ENCODE measurements at regions of chr6 and their contacts with region 1.

Region 1: DNA sequence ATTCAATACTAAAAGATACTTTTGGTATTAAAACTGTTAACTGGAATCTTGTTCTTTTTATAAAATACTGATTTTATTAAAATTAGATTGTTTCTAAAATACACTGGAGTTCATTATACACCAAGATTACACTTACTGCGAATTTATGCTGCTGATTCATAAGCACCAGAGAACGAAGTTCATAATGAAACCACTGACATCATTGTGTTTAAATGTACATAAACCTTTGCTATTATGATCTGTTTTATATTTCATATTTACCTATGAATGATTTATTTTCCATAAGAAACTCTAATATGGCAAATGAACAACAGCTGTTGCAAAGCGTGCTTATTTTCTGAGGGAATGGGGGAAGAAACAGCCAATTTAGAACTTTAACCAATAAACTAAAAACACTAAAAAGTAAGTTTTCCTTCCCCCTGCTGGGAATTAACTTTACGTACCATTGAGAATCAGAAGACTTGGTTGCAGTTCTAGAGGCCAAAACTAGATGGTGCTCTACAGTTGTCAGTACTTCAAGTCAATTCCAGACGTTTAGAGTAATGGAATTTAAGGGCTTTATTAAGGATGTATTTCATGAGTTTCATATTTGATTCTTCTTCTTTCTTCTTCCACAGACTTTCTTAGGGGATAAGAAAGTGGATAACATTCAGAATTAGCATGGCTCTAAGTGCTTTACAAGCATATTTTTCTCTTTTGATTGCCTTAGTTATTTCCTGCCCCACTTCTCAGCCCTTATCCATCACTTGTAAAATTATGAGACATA is 30.8 kb upstream of the COL19A1 start:
- DNase-seq: peak; percentile 12
- H3K4me3 ChIP-seq: no peak overlapping the region
- H3K27me3 ChIP-seq: no peaks in the 10 kb centered on the region
- CTCF ChIP-seq: peak; percentile 90

Region 2: DNA sequence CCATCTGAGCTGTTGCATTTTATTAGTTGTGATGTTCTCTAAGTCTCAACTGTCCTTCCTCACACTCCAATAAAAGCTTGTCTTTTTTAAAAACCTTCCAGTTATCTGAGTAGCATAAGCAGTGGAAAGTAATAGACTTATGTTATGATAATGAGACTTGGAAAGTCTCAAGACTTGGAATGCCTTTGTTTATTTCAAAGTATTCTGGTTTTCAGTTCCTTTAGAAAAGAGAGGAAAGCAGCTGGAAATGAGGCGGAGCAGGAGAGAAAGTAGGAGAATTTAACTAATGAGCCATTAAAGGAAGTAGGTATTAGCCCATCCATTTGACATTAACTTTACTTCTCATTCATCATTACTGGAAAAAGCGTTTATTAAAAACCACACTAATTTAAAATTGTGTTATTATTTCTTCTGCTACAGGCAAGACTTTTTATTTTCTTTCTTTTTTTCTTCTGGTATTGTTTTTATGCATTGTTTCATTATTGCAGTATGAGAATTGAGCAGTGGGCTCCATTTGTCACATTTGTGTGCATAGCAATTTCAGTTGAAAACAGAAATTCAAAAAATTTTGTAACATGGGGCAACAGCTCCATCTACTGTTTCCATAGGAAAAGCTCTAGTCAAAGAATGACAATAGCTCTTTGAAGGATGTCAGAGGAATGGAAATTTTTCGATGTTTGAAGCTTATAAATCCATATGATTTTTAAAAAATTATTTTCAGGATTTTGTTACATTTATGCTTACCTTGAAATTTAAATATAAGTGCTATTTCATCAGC is 272.4 kb after region 1 on chr6:
- CTCF ChIA-PET with region 1: interaction called, 19 read pairs
- POLR2A ChIA-PET with region 1: no interaction called
- DNase-seq: no peak
- H3K4me3 ChIP-seq: no peak overlapping the region
- H3K27me3 ChIP-seq: no peaks in the 10 kb centered on the region
- CTCF ChIP-seq: peak; percentile 68

Region 3: DNA sequence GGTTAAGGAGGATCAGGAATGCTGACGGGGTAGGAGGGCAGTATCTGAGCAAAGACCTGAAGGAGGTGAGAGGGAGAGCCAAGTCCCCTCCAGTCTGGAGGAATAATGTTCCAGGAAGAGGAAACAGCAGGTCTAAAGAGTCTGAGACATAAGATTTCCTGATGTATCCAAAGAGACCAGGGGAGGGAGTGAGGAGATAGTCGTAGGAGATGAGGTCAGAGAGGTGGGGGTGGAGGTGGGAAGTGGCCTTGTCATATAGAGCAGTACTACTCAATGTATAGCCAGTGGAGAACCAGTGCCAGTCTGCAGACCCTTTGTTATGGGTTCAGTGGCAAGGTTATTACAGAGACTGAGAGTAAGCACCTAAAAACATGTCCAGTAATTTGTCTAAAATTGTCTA is 336.7 kb after region 1 on chr6:
- CTCF ChIA-PET with region 1: no interaction called
- POLR2A ChIA-PET with region 1: no interaction called
- DNase-seq: no peak
- H3K4me3 ChIP-seq: no peak overlapping the region
- H3K27me3 ChIP-seq: no peaks in the 10 kb centered on the region; the same call in 1 of the 2 replicates
- CTCF ChIP-seq: no peak

Measured in BJ (cell line).